Left ventricle myocardium superior (tissue), 1 donor: ENCODE measurements at regions of chr9 and their contacts with region 1.

Region 1: DNA sequence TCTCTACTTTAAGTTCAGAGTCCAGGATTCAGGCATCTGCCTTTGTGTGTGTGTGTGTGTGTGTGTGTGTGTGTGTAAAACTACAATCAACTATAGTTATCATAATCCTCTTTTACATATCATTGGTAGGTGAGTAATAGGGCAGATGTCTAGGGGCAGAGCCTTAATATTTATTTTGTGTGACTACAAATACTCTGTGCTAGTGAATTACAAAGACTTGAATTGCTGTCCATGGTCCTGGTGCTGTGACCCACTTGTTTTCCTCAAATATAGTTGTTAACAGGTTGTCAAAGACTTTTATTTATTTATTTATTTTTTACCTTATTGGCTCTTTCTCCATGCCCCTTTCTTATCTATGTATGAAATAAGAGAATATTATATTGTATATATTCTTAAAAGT is 196.8 kb downstream of the ANXA1 start:
- DNase-seq: no peak
- ATAC-seq: no peak

Region 2: DNA sequence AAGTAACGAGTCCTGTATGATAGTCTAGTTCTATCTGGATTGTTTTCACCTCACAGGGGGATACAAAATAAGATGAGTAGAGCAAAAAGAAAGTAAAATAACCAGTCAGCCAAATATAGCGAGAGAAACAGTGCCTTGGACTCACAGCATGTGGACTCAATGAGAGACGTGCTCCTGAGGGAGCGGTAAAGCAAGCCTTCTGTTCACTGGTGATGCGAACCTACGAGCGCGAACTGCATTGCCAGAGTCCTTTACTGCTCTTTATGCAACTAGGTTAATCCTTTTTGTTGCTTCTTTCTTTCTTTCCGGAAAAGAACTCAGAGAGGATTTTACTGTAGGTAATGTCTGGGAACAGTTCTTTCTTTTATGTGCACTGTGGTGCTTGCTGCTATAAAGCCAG is 64.1 kb before region 1 on chr9:
- intact Hi-C with region 1: loop called (anchors 10 kb)
- DNase-seq: no peak
- ATAC-seq: no peak

Region 3: GRCh38 chr9:73402081-73403028 is 53.9 kb after region 1 on chr9:
- intact Hi-C with region 1: loop called (anchors 10 kb)
- DNase-seq: no peak
- ATAC-seq: peak; percentile 90

Region 4: GRCh38 chr9:73683862-73684591 is 335.6 kb after region 1 on chr9:
- intact Hi-C with region 1: no loop called
- DNase-seq: no peak
- ATAC-seq: no peak